ENCODE measurements at regions of chr19 and their contacts with region 1.

Region 1: DNA sequence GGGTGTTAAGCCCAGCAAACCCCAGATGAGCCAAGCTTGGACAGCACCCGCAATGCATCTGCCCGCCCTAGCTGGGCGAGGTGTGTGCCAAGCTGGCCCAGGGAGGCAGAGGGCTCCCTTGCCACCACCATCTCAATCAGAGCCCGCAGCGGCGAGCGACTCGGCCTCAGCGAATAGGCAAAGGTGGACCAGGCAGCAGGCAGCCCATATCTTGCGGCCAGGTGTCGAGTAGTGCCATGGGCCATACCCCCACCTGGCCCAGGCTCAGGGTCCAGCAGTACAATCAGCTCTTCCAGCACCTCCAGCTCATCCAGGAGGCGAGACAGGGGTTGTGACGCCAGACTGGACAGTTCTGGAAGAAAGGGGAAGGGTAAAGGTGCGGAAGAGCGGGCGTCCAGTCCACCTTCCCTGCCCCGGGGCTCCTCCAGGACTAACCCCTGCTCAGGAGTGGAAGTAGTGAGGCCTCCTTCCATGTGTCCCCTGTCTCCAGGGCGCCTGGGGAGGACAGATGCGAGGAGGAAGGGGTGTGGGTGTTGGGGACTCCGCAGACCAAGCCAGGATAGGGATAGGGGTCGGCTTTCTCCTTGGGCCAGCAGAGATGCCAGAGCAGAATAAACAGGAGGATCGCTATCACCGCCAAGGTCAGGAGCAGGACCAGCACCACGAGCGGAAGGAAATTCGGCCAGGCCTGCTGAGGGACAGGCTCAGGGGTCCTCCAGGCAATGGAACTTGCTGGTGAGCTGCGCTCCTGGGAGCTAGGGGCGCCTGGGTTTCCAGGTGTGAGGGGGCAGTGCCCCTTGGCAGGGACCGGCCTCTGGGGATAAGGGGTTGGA is 2.8 kb downstream of the IGFLR1 start:
- DNase-seq: no peak
- H3K4me3 ChIP-seq: peak overlapping the region; percentile 64 to 66
- H3K27ac ChIP-seq: peak overlapping the region; percentile 66
- H3K4me1 ChIP-seq: peaks cover 23% of the 10 kb centered on the region
- H3K27me3 ChIP-seq: no peaks in the 10 kb centered on the region
- CTCF ChIP-seq: no peak
- POLR2A ChIP-seq: no peak

Region 2: GRCh38 chr19:35693830-35694599 is 45.5 kb before region 1 on chr19:
- intact Hi-C with region 1: loop called (anchors 2 kb)
- DNase-seq: no peak
- H3K4me3 ChIP-seq: no peak overlapping the region
- H3K27ac ChIP-seq: no peak overlapping the region
- H3K4me1 ChIP-seq: no peaks in the 10 kb centered on the region
- H3K27me3 ChIP-seq: no peaks in the 10 kb centered on the region
- CTCF ChIP-seq: peak; percentile 85 to 98 (median 92)
- POLR2A ChIP-seq: no peak

Region 3: GRCh38 chr19:35805526-35806102 is 66.1 kb after region 1 on chr19:
- intact Hi-C with region 1: no loop called
- DNase-seq: no peak
- H3K4me3 ChIP-seq: no peak overlapping the region
- H3K27ac ChIP-seq: no peak overlapping the region
- H3K4me1 ChIP-seq: no peaks in the 10 kb centered on the region
- H3K27me3 ChIP-seq: no peaks in the 10 kb centered on the region
- CTCF ChIP-seq: no peak
- POLR2A ChIP-seq: no peak

Measured in vagina (tissue), 2 donors.